Common myeloid progenitor, CD34-positive (primary cell): ENCODE measurements at regions of chr9 and their contacts with region 1.

Region 1: DNA sequence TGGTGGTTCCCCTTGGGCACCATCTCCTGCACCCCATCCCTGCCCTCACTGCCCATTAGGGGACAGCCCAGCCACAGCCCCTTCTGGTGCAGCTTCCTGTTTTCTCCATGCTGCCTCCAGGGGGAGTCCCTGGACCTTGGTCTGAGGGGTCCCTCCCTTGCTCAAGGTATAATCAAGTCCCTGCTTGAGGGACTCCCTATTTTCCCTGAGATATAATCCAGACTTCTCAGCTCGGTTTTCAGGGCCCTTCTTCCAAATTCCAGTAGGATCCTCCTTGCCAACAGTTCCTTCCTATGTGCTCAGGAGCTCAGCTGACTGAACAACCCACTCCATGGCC is 30.4 kb upstream of the DAB2IP start:
- DNase-seq: peak; percentile 52 to 75 (median 73)
- H3K4me3 ChIP-seq: no peak overlapping the region
- H3K27ac ChIP-seq: no peak overlapping the region
- H3K4me1 ChIP-seq: peaks cover 0 to 10% (median 5%) of the 10 kb centered on the region in 4 experiments
- H3K27me3 ChIP-seq: no peaks in the 10 kb centered on the region

Region 2: DNA sequence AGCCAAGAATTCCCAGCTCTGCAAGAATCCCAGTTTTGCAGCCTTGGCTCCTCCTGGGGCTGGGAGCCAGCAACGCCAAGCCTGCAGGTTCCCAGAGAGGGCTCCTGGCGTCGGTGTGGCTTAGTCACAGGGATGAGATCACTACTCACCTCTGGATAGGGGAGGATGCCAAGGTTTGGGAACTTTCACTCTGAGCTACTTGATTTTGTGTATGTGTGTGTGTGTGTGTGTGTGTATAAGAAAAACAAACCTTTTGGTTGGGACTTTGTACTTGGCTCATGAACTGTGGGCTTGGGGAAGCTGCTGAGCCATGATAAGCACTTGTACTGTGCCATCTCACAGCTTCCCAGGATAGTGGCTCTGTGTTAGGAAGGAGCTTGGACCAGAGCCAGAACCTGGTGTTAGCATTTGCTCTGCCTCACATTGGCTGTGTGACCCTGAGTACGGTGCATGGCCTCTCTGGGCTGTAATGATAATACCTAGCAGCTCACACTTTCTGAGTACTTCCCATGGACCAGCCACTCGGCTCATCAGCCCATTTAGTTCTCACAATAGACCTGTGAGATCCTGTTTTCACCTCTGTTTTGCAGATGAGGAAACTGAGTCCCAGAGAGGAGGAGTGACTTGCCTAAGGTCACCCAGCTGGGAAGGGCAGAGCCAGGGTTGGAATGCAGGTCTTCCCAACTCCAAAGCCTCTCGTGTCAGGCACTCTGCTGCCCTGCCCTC is 11.1 kb before region 1 on chr9:
- CTCF ChIA-PET with region 1: interaction called, 12 read pairs
- POLR2A ChIA-PET with region 1: no interaction called
- DNase-seq: no peak
- H3K4me3 ChIP-seq: no peak overlapping the region
- H3K27ac ChIP-seq: no peak overlapping the region
- H3K4me1 ChIP-seq: peaks cover 8 to 25% (median 20%) of the 10 kb centered on the region in 4 experiments
- H3K27me3 ChIP-seq: peaks cover 0 to 16% (median 5%) of the 10 kb centered on the region in 5 experiments

Region 3: GRCh38 chr9:121634329-121635261 is 13.5 kb after region 1 on chr9:
- CTCF ChIA-PET with region 1: interaction called, 13 read pairs
- POLR2A ChIA-PET with region 1: no interaction called
- DNase-seq: peak; percentile 38 to 91 (median 83)
- H3K4me3 ChIP-seq: peak overlapping the region in 2 of 7 experiments; percentile 4 to 29
- H3K27ac ChIP-seq: no peak overlapping the region
- H3K4me1 ChIP-seq: peaks cover 0 to 51% (median 41%) of the 10 kb centered on the region in 4 experiments
- H3K27me3 ChIP-seq: no peaks in the 10 kb centered on the region

Region 4: GRCh38 chr9:121658166-121658565 is 37.1 kb after region 1 on chr9:
- CTCF ChIA-PET with region 1: interaction called, 16 read pairs
- POLR2A ChIA-PET with region 1: no interaction called
- DNase-seq: no peak
- H3K4me3 ChIP-seq: no peak overlapping the region
- H3K27ac ChIP-seq: no peak overlapping the region
- H3K4me1 ChIP-seq: no peaks in the 10 kb centered on the region
- H3K27me3 ChIP-seq: peaks cover 0 to 24% (median 4%) of the 10 kb centered on the region in 5 experiments

Region 5: GRCh38 chr9:121692606-121693387 is 71.7 kb after region 1 on chr9:
- CTCF ChIA-PET with region 1: interaction called, 10 read pairs
- POLR2A ChIA-PET with region 1: no interaction called
- DNase-seq: peak in 1 of 3 donors; percentile 17
- H3K4me3 ChIP-seq: no peak overlapping the region
- H3K27ac ChIP-seq: no peak overlapping the region
- H3K4me1 ChIP-seq: peaks cover 5 to 13% (median 9%) of the 10 kb centered on the region in 4 experiments
- H3K27me3 ChIP-seq: peaks cover 0 to 18% (median 6%) of the 10 kb centered on the region in 5 experiments

Region 6: DNA sequence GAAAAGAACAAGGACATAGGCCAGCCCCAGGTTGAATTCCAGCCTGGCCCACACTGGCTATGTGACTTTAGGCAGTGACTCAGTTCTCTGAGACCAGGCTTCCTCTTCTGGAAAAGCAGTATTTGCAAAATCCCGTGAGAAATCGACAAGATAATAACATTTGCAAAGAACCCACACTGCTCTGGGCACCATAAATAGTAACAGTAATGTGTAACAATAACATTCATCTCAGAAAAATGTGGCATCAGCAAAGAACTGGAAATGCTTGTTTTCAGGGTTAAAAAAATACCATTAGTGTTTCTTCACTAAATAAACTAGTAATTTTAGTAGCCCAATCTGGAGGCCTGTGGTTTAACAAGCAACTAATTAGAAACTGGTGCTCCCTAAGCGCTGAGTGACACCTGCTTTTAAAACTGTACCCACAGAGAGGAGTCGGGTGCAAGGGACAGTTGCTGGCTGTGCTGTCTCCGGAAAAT is 323.7 kb after region 1 on chr9:
- CTCF ChIA-PET with region 1: no interaction called
- POLR2A ChIA-PET with region 1: no interaction called
- DNase-seq: no peak
- H3K4me3 ChIP-seq: no peak overlapping the region
- H3K27ac ChIP-seq: no peak overlapping the region
- H3K4me1 ChIP-seq: no peaks in the 10 kb centered on the region
- H3K27me3 ChIP-seq: peaks cover 0 to 1% (median 0%) of the 10 kb centered on the region in 5 experiments